ENCODE measurements at regions of chr11 and their contacts with region 1.

Region 1: DNA sequence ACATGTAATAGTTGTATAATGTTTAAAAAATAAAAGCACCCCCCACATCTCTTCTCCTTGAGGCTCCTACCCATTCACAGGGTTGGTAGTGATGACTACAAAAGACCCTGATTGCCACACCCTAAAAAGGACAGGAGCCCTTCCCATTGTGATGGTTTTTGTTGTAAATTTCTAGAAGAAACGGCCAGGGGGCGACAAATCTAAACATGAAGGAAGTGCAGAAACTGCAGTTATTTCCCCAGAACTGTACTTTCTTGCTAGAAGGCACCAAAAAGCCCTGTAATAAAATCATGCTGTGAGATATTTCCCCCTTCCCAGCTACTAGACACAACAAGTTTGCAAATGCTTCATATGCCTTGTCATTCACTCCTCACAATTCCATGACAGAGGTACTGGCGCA is 10.8 kb downstream of the PRR5L start:
- DNase-seq: peak in 1 of 2 donors; percentile 43
- ATAC-seq: peak in 2 of 3 donors; percentile 29 to 47
- H3K4me3 ChIP-seq: no peak overlapping the region
- H3K4me3 Mint-ChIP-seq: peak overlapping the region; percentile 38
- H3K27ac ChIP-seq: no peak overlapping the region
- H3K27ac Mint-ChIP-seq: peak overlapping the region; percentile 27 to 31
- H3K4me1 ChIP-seq: no peaks in the 10 kb centered on the region
- H3K4me1 Mint-ChIP-seq: peaks cover 20 to 21% of the 10 kb centered on the region in 2 donors
- H3K27me3 ChIP-seq: no peaks in the 10 kb centered on the region
- H3K27me3 Mint-ChIP-seq: peaks cover 11 to 16% of the 10 kb centered on the region in 2 donors
- CTCF ChIP-seq: peak; percentile 59

Region 2: GRCh38 chr11:36289226-36289852 is 17.5 kb before region 1 on chr11 and contains the start of gene COMMD9:
- intact Hi-C with region 1: no loop called
- DNase-seq: peak; percentile 86 to 95
- ATAC-seq: peak; percentile 96 to 99 (median 98)
- H3K4me3 ChIP-seq: peak within 1 kb of the TSS; percentile 88
- H3K4me3 Mint-ChIP-seq: peak within 1 kb of the TSS; percentile 97
- H3K27ac ChIP-seq: no peak within 1 kb of the TSS
- H3K27ac Mint-ChIP-seq: peak within 1 kb of the TSS; percentile 86 to 94
- H3K4me1 ChIP-seq: peaks cover 15% of the 10 kb centered on the region
- H3K4me1 Mint-ChIP-seq: peaks cover 34 to 37% of the 10 kb centered on the region in 2 donors
- H3K27me3 ChIP-seq: no peaks in the 10 kb centered on the region
- H3K27me3 Mint-ChIP-seq: no peaks in the 10 kb centered on the region
- CTCF ChIP-seq: no peak
- total RNA-seq, gene COMMD9: 64.6 to 79.1 (median 74.0) TPM

Region 3: DNA sequence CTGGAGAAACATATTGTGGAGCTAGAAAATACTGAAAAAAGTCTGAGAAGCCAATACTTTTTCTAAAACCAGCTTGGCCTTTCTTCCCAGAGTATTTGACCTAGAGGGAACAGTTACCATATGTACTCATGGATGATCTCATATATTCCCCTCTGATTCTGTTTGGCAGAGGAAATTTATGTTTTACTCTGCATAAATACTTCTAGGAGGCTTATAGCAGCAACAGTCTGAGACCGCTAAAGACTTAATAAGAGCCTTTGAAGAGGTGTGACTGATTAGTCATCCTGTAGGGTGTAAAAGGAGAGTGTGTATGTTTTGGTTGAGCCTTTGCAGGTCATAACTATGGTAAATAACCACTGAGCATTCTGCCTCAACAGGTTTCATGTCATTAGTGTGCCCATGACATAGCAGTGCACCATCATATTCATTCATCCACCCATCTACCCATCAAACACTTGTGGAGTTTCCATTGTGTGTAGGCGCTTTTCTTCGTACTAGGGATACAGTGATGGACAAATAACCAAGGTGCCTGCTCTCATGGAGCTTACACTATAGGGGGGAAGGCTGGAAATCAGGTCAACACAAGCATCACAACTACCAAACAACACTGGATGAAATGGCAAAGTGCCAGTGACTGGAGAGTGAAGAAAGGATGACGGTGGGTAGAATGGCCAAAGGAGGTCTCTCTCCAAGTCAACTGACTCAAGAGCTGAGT is 158.7 kb after region 1 on chr11:
- intact Hi-C with region 1: no loop called
- DNase-seq: no peak
- ATAC-seq: peak in 2 of 3 donors; percentile 29 to 57
- H3K4me3 ChIP-seq: no peak overlapping the region
- H3K4me3 Mint-ChIP-seq: no peak overlapping the region
- H3K27ac ChIP-seq: no peak overlapping the region
- H3K27ac Mint-ChIP-seq: peak overlapping the region; percentile 63 to 87
- H3K4me1 ChIP-seq: peaks cover 8% of the 10 kb centered on the region
- H3K4me1 Mint-ChIP-seq: peaks cover 71 to 84% of the 10 kb centered on the region in 2 donors
- H3K27me3 ChIP-seq: no peaks in the 10 kb centered on the region
- H3K27me3 Mint-ChIP-seq: no peaks in the 10 kb centered on the region
- CTCF ChIP-seq: no peak

Region 4: DNA sequence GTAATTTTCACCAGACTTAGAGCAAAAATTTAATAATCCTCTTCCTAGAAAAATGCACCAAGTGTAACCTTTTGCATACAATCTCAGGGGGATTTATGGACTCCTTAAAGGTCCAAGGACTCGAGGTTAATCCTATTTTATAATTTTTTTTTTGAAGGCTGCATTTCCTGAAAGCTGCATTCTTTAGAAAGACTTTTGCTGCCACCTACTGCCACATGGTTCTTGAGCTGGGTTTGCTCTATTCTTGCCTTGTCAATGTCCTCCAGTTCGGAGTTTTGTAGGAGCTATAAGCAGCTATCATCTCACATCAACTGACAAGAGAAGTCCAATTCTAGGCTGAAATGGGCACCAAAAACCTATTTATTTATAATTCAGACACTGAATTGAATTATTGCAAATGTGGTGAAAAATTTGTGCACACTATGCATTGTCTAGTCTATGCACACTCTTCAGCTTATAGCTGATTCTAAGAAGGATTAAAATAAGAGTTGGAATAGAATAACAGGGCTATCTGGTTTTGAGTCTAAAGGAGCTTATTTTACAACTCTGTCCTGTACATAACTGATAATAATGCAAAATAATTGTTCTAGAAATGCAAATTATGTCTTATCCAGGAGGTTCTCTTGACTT is 171.9 kb after region 1 on chr11:
- intact Hi-C with region 1: loop called (anchors 1 kb)
- DNase-seq: peak in 1 of 2 donors; percentile 68
- ATAC-seq: peak; percentile 57 to 65 (median 59)
- H3K4me3 ChIP-seq: no peak overlapping the region
- H3K4me3 Mint-ChIP-seq: no peak overlapping the region
- H3K27ac ChIP-seq: no peak overlapping the region
- H3K27ac Mint-ChIP-seq: peak overlapping the region in 1 of 2 donors; percentile 63
- H3K4me1 ChIP-seq: peaks cover 6% of the 10 kb centered on the region
- H3K4me1 Mint-ChIP-seq: peaks cover 8 to 14% of the 10 kb centered on the region in 2 donors
- H3K27me3 ChIP-seq: no peaks in the 10 kb centered on the region
- H3K27me3 Mint-ChIP-seq: no peaks in the 10 kb centered on the region
- CTCF ChIP-seq: peak; percentile 58

Region 5: DNA sequence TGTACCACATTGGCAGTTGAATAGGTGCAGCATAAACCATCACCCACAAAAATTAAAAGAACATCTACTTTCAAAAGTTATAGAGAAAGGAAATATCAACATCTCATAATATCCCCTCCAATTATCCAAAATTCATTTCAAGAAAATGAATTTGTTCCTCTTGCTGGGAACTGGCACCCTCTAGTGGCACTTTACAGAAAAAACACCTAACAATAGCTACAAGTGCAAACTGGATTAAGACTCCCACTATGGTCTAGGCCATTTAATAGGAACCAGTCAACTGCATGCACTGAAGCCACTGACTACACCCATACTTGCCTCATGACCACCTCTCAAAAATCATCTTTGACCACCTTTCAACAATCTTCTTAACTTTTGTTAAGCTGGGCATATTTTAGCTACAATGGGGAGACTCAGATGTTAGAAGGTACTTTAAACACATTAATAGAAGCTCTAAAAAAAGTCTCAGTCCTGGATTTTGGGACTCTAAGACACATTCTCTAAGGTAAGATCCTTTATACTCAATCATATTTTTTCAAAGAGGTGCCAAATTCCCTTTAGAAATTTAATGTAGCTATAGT is 185.9 kb after region 1 on chr11:
- intact Hi-C with region 1: loop called (anchors 1 kb)
- DNase-seq: peak in 1 of 2 donors; percentile 81
- ATAC-seq: peak; percentile 72 to 79 (median 75)
- H3K4me3 ChIP-seq: no peak overlapping the region
- H3K4me3 Mint-ChIP-seq: no peak overlapping the region
- H3K27ac ChIP-seq: no peak overlapping the region
- H3K27ac Mint-ChIP-seq: peak overlapping the region; percentile 62 to 68
- H3K4me1 ChIP-seq: peaks cover 5% of the 10 kb centered on the region
- H3K4me1 Mint-ChIP-seq: peaks cover 25 to 29% of the 10 kb centered on the region in 2 donors
- H3K27me3 ChIP-seq: no peaks in the 10 kb centered on the region
- H3K27me3 Mint-ChIP-seq: no peaks in the 10 kb centered on the region
- CTCF ChIP-seq: peak; percentile 86

Measured in natural killer cell (primary cell).